Adrenal gland (tissue), 19 donors: ENCODE measurements at regions of chr20 and their contacts with region 1.

Region 1: GRCh38 chr20:21529863-21530262 is 16.0 kb upstream of the NKX2-2 start:
- DNase-seq: no peak
- H3K4me3 ChIP-seq: no peak overlapping the region
- H3K27ac ChIP-seq: no peak overlapping the region
- H3K4me1 ChIP-seq: no peaks in the 10 kb centered on the region
- H3K27me3 ChIP-seq: no peaks in the 10 kb centered on the region
- CTCF ChIP-seq: peak; percentile 25 to 53 (median 40)
- POLR2A ChIP-seq: no peak

Region 2: GRCh38 chr20:21342656-21343345 is 187.1 kb before region 1 on chr20:
- intact Hi-C with region 1: no loop called
- DNase-seq: no peak
- H3K4me3 ChIP-seq: no peak overlapping the region
- H3K27ac ChIP-seq: no peak overlapping the region
- H3K4me1 ChIP-seq: peaks cover 0 to 10% of the 10 kb centered on the region in 2 donors
- H3K27me3 ChIP-seq: no peaks in the 10 kb centered on the region
- CTCF ChIP-seq: no peak
- POLR2A ChIP-seq: no peak

Region 3: GRCh38 chr20:21615617-21616080 is 85.8 kb after region 1 on chr20:
- intact Hi-C with region 1: loop called (anchors 5 to 10 kb)
- DNase-seq: peak; percentile 65 to 86 (median 84)
- H3K4me3 ChIP-seq: no peak overlapping the region
- H3K27ac ChIP-seq: no peak overlapping the region
- H3K4me1 ChIP-seq: peaks cover 0 to 4% of the 10 kb centered on the region in 2 donors
- H3K27me3 ChIP-seq: peaks cover 10% of the 10 kb centered on the region
- CTCF ChIP-seq: peak; percentile 69 to 79 (median 74)
- POLR2A ChIP-seq: no peak